ENCODE measurements at regions of chr5 and their contacts with region 1.

Region 1: GRCh38 chr5:136424835-136425584 is 59.7 kb upstream of the TRPC7 start:
- DNase-seq: peak; percentile 56
- ATAC-seq: peak; percentile 97
- H3K4me3 ChIP-seq: no peak overlapping the region
- H3K27ac ChIP-seq: no peak overlapping the region
- H3K4me1 ChIP-seq: no peaks in the 10 kb centered on the region
- H3K27me3 ChIP-seq: no peaks in the 10 kb centered on the region; a peak in 1 of 5 replicates
- CTCF ChIP-seq: peak; percentile 83
- EP300 ChIP-seq: no peak
- POLR2A ChIP-seq: no peak
- RAD21 ChIP-seq: peak; percentile 41; the same call in 1 of the 2 replicates

Region 2: GRCh38 chr5:135851186-135851914 is 573.7 kb before region 1 on chr5:
- CTCF ChIA-PET with region 1: no interaction called
- POLR2A ChIA-PET with region 1: no interaction called
- in situ Hi-C with region 1: loop called (anchors 25 kb)
- intact Hi-C with region 1: no loop called
- DNase-seq: no peak
- ATAC-seq: no peak
- H3K4me3 ChIP-seq: no peak overlapping the region
- H3K27ac ChIP-seq: no peak overlapping the region
- H3K4me1 ChIP-seq: no peaks in the 10 kb centered on the region
- H3K27me3 ChIP-seq: peaks cover 0 to 21% of the 10 kb centered on the region in 2 experiments; a peak in 2 of 5 replicates
- CTCF ChIP-seq: no peak
- EP300 ChIP-seq: no peak
- POLR2A ChIP-seq: no peak
- RAD21 ChIP-seq: no peak

Region 3: DNA sequence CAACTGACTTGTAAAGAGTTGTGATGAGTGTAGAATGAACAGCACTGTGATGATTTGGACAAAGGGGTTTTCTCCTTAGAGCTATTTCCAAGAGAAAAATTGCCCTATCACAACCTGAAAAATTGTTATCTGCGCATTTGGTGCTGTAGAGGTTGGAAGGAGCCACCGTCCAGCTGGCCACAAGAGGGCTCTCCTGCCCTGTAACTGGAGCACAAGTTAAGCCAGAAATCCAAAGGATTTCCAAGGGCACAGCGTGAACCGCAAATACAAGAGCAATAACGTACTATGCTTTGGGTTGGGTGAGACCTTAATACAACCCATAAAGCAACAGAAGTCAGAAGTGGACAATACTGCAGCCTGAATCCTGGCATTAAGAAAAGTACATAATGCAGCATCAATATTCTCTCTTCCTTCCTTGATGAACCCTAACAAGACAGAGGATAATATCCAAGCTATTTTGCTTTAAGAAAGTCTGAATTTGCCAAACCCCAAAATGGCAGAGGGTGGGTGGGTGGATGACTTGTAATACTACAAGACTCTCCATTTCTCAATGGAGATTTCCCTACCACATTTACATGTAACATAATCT is 175.2 kb before region 1 on chr5:
- CTCF ChIA-PET with region 1: interaction called, 25 read pairs
- POLR2A ChIA-PET with region 1: no interaction called
- in situ Hi-C with region 1: loop called (anchors 5 kb)
- intact Hi-C with region 1: loop called (anchors 1 kb)
- DNase-seq: peak; percentile 47
- ATAC-seq: peak; percentile 95
- H3K4me3 ChIP-seq: no peak overlapping the region
- H3K27ac ChIP-seq: no peak overlapping the region
- H3K4me1 ChIP-seq: no peaks in the 10 kb centered on the region
- H3K27me3 ChIP-seq: peaks cover 0 to 12% of the 10 kb centered on the region in 2 experiments; a peak in 1 of 5 replicates
- CTCF ChIP-seq: peak; percentile 90
- EP300 ChIP-seq: no peak
- POLR2A ChIP-seq: no peak
- RAD21 ChIP-seq: peak; percentile 72

Region 4: DNA sequence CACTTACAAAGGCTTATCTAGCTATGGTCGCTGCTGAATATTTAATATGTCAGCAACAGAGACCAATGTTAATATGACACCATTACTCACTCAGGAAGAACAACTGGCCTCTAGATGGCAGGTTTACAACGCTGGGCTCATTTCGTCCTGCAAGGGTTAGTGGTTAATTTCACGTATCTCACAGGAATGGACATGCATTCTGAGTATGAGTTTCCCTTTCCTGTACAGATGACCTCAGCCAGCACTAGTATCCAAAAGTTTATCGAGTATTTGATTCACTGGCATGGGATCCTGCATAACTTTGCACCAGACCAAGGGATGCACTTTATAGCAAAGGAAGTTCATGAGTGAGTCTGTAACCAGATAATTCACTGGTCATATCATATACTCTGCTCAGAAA is 51.0 kb before region 1 on chr5:
- CTCF ChIA-PET with region 1: no interaction called
- POLR2A ChIA-PET with region 1: no interaction called
- in situ Hi-C with region 1: no loop called
- intact Hi-C with region 1: loop called (anchors 10 kb)
- DNase-seq: peak; percentile 13
- ATAC-seq: peak; percentile 60
- H3K4me3 ChIP-seq: no peak overlapping the region
- H3K27ac ChIP-seq: no peak overlapping the region
- H3K4me1 ChIP-seq: no peaks in the 10 kb centered on the region
- H3K27me3 ChIP-seq: no peaks in the 10 kb centered on the region
- CTCF ChIP-seq: peak; percentile 31
- EP300 ChIP-seq: no peak
- POLR2A ChIP-seq: no peak
- RAD21 ChIP-seq: no peak

Region 5: GRCh38 chr5:136435946-136436544 is 11.0 kb after region 1 on chr5:
- CTCF ChIA-PET with region 1: no interaction called
- POLR2A ChIA-PET with region 1: no interaction called
- in situ Hi-C with region 1: no loop called
- intact Hi-C with region 1: no loop called
- DNase-seq: no peak
- ATAC-seq: no peak
- H3K4me3 ChIP-seq: no peak overlapping the region
- H3K27ac ChIP-seq: no peak overlapping the region
- H3K4me1 ChIP-seq: no peaks in the 10 kb centered on the region
- H3K27me3 ChIP-seq: no peaks in the 10 kb centered on the region; a peak in 1 of 5 replicates
- CTCF ChIP-seq: no peak
- EP300 ChIP-seq: no peak
- POLR2A ChIP-seq: no peak
- RAD21 ChIP-seq: no peak